Activated T-helper 1 cell treated with anti-CD3 and anti-CD28 coated beads, Interleukin-12 subunit alpha, Interleukin-12 subunit beta, Interleukin-2, Interleukin-4 antibody, amounts not matched to agents 30 ng/mL and 10 ng/mL and 1 ng/mL, durations not matched to agents 14 hours and 24 hours and 36 hours (primary cell): ENCODE measurements at regions of chrX and their contacts with region 1.

Region 1: DNA sequence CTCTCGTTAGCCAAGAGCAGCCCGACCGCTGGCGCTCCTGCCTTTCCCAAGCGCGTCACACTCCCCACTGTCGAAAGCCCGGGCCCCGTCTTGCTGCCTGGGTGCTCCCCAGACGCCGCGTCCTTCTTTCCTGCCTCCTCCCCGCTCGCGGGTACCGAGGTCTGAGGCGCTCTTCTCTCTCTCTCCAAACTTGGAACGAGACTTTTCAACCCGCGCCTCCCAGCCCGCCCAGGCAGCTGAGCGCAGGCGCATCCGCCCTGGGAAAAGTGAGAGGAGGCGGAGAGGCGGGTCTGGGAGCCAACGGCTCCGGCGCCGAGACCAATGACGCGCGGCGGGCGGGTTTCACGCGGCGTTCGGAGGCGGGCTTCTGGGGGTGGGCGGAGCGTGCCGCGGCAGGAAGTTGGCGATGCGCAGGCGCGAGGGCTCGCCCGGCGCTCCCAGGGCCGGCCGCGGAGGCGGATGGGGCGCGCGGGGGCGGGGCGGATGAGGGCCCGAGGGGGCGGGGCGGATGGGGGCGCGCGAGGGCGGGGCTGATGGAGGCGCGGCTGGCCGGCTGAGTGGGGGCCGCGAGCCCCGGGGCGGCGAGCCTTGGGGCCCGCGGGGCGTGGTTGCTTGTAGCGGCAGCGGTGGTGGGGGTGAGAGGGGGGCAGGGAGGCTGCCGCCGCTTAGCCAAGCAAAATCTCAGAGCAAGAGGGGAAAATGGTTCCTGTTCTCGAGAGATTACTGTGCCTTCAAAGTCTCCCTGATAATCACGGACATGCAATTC is at the start of gene RBBP7:
- DNase-seq: peak; percentile 88
- H3K4me3 Mint-ChIP-seq: peak within 1 kb of the TSS; percentile 97
- H3K27ac Mint-ChIP-seq: peak within 1 kb of the TSS; percentile 96
- H3K4me1 Mint-ChIP-seq: peaks cover 20% of the 10 kb centered on the region
- H3K27me3 Mint-ChIP-seq: peaks cover 8% of the 10 kb centered on the region
- total RNA-seq, gene RBBP7: 127 and 134 TPM in 2 replicates

Region 2: GRCh38 chrX:15854712-15855567 is 1015.3 kb before region 1 on chrX and contains the start of gene AP1S2:
- intact Hi-C with region 1: loop called (anchors 2 kb)
- DNase-seq: peak; percentile 89
- H3K4me3 Mint-ChIP-seq: peak within 1 kb of the TSS; percentile 88
- H3K27ac Mint-ChIP-seq: peak within 1 kb of the TSS; percentile 90
- H3K4me1 Mint-ChIP-seq: peaks cover 10% of the 10 kb centered on the region
- H3K27me3 Mint-ChIP-seq: no peaks in the 10 kb centered on the region
- total RNA-seq, gene AP1S2: 20.7 and 35.3 TPM in 2 replicates

Region 3: DNA sequence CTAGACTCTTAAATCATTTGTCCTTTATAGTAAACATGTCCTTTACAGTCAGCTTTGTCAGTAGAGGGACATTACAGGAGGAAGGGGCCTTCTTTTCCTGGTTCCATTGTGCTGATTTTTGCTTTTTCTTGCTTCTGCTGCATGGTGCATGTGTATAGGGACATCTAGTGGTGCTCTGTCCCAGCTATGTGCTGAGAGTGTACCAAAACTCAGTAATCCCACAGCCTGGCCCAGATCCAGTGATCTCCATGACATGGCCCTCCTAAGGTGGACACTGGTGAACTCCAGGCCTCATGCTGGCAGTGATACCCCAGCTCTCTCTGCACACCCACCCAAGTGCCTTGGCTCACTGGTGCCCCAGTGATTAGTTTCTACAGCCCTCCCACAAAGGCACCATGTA is 657.8 kb before region 1 on chrX:
- intact Hi-C with region 1: no loop called
- DNase-seq: no peak
- H3K4me3 Mint-ChIP-seq: no peak overlapping the region
- H3K27ac Mint-ChIP-seq: no peak overlapping the region
- H3K4me1 Mint-ChIP-seq: no peaks in the 10 kb centered on the region
- H3K27me3 Mint-ChIP-seq: peaks cover 5% of the 10 kb centered on the region

Region 4: GRCh38 chrX:16786139-16786790 is 84.0 kb before region 1 on chrX and contains the start of gene TXLNG:
- intact Hi-C with region 1: loop called (anchors 1 kb)
- DNase-seq: peak; percentile 91
- H3K4me3 Mint-ChIP-seq: peak within 1 kb of the TSS; percentile 92
- H3K27ac Mint-ChIP-seq: peak within 1 kb of the TSS; percentile 94
- H3K4me1 Mint-ChIP-seq: peaks cover 11% of the 10 kb centered on the region
- H3K27me3 Mint-ChIP-seq: no peaks in the 10 kb centered on the region
- total RNA-seq, gene TXLNG: 23.8 and 25.4 TPM in 2 replicates

Region 5: GRCh38 chrX:16855363-16856075 is 14.8 kb before region 1 on chrX:
- intact Hi-C with region 1: loop called (anchors 1 kb)
- DNase-seq: no peak
- H3K4me3 Mint-ChIP-seq: no peak overlapping the region
- H3K27ac Mint-ChIP-seq: peak overlapping the region; percentile 79
- H3K4me1 Mint-ChIP-seq: peaks cover 32% of the 10 kb centered on the region
- H3K27me3 Mint-ChIP-seq: no peaks in the 10 kb centered on the region

Region 6: GRCh38 chrX:16946361-16946964 is 76.2 kb after region 1 on chrX and contains the start of gene REPS2:
- intact Hi-C with region 1: loop called (anchors 2 kb)
- DNase-seq: peak; percentile 39
- H3K4me3 Mint-ChIP-seq: peak within 1 kb of the TSS; percentile 74
- H3K27ac Mint-ChIP-seq: no peak within 1 kb of the TSS
- H3K4me1 Mint-ChIP-seq: no peaks in the 10 kb centered on the region
- H3K27me3 Mint-ChIP-seq: peaks cover 24% of the 10 kb centered on the region
- total RNA-seq, gene REPS2: not detected in 2 replicates